HEK293 (cell line): ENCODE measurements at regions of chr7 and their contacts with region 1.

Region 1: GRCh38 chr7:105759670-105760550 is 116.5 kb downstream of the ATXN7L1 start:
- H3K4me3 ChIP-seq: no peak overlapping the region
- H3K27ac ChIP-seq: no peak overlapping the region
- H3K4me1 ChIP-seq: no peaks in the 10 kb centered on the region
- CTCF ChIP-seq: peak; percentile 27; the same call in 1 of the 2 replicates

Region 2: GRCh38 chr7:106041140-106041717 is 281.3 kb after region 1 on chr7:
- CTCF ChIA-PET with region 1: interaction called, 63 read pairs
- POLR2A ChIA-PET with region 1: no interaction called
- H3K4me3 ChIP-seq: no peak overlapping the region
- H3K27ac ChIP-seq: no peak overlapping the region
- H3K4me1 ChIP-seq: 0 out of 2 replicates have a peak, but pooled peaks cover 2% of the 10 kb centered on the region
- CTCF ChIP-seq: peak; percentile 63

Region 3: DNA sequence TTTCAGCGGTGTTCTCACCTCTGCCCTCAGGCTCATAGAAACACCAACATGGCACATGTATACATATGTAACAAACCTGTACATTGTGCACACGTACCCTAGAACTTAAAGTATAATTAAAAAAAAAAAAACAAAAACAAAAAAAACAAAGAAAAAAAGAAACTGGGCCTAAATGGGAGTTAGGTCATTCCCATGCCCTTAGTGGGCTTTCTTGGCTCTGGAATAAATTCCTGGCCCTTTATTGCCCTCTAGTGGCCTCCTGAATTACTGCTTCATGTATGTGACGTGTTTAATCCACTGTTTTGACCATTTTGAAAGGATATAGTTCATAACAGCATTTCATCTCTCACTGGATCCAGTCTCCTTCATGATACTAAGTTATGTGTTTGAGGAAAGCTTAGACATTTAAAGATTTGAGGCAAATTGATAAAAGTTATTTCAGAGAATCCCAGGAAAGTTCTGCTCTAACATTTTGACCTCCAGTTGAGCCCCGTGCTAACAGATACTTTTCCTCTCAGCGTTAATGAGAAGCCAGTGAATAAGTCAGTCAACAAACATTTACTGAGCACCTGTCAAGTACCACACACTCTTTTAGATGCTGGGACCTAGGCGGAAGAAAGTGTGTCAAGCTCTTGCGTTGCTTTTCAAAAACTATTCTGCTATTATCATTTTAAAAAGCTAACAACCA is 406.9 kb after region 1 on chr7:
- CTCF ChIA-PET with region 1: interaction called, 10 read pairs
- POLR2A ChIA-PET with region 1: no interaction called
- H3K4me3 ChIP-seq: no peak overlapping the region
- H3K27ac ChIP-seq: no peak overlapping the region
- H3K4me1 ChIP-seq: no peaks in the 10 kb centered on the region
- CTCF ChIP-seq: peak; percentile 63